ENCODE measurements at regions of chr6 and their contacts with region 1.

Region 1: DNA sequence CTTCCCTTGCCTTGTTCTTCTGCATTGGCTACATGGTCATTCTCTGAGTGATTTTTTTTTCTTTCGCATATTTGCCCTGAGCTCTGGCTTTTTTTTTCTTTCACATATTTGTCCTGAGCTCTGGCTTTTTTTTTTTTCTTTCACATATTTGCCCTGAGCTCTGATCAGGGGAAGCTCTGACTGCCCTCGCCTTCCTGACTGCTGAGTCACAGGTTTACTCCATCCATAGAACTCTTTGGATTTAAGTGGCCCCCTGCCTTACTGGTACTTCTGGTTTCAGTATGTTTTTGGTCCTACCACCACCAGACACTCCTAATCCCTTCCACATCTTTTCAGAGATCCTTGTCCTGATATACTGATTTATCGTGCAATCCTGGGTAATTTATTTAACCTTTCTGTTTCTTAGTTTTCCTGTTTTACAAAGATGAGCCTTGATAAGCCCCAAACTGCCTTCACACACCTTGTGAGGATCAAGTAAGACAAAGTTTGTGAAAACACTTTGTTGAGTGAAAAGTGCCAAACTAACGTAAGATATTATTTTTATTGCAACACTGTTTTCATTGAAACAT is 201.2 kb downstream of the OGFRL1 start:
- DNase-seq: peak in 1 of 4 donors; percentile 52
- ATAC-seq: peak; percentile 91
- H3K4me3 ChIP-seq: no peak overlapping the region
- H3K27ac ChIP-seq: no peak overlapping the region
- H3K4me1 ChIP-seq: peaks cover 0 to 10% of the 10 kb centered on the region in 2 donors
- H3K27me3 ChIP-seq: no peaks in the 10 kb centered on the region
- CTCF ChIP-seq: no peak

Region 2: DNA sequence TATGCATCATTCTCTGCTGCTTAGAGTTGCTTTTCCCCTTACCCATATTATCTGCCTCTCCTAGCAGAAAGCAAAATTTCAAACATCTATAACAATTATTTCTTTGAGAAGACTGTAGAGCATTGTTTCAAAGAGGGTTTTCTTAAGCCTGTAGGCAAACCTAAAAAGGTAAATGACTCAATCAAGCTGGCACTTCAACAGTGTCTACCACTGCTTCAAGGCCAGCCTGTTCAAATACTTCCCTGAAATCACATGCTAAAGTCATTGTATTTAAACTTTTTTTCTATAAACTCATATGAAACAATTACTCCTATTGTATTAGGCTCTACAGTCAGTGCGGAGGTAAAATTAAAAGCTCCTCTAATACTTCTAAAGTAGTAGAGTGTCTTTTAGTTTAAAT is 114.2 kb before region 1 on chr6:
- intact Hi-C with region 1: loop called in 1 of 2 experiments (anchors 10 kb)
- DNase-seq: no peak
- ATAC-seq: peak; percentile 91
- H3K4me3 ChIP-seq: no peak overlapping the region
- H3K27ac ChIP-seq: peak overlapping the region in 1 of 2 donors; percentile 11
- H3K4me1 ChIP-seq: peaks cover 0 to 5% of the 10 kb centered on the region in 2 donors
- H3K27me3 ChIP-seq: no peaks in the 10 kb centered on the region
- CTCF ChIP-seq: no peak

Measured in left lung (tissue), 14 donors.